Posterior vena cava (tissue), 2 donors: ENCODE measurements at regions of chr13 and their contacts with region 1.

Region 1: DNA sequence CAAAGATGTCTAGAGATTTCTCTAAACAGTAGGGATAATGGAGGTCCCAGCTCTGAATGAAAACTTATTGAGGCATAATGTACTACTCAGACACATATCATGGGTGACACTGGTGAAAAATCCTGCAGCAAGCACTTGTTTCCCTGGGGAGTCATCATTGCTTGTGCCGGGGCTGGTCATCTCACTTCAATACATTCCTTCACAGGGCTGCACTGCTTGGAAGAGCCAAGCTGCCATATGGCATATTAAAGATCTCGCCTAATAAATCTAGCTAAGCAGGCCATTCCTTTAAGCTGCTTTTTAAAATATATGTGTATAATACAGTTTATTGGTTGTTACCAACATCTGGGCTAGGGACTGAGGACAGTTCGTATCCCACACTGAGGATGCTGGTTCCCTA is 332.2 kb upstream of the GPC6 start:
- DNase-seq: no peak

Region 2: GRCh38 chr13:92488249-92488852 is 406.1 kb before region 1 on chr13:
- intact Hi-C with region 1: no loop called
- DNase-seq: no peak

Region 3: GRCh38 chr13:92671821-92672220 is 222.6 kb before region 1 on chr13:
- intact Hi-C with region 1: no loop called
- DNase-seq: no peak

Region 4: DNA sequence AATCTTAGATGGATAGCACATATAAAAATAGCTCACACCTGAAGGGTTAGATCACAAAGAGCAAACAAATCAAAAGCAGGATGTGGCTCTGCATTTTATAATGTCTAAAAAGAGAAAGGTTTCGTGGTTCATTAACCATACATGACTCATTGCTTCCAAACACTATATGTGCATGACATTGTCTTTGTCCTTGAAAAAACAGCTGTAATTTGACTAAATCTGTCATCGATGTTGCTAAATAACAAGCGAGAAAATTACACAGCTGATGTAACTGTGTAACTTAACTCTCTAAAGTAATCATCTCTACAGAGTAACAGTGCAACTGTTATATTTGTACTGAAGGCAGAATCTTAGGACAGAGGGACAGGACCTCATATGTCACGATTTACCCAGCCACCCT is 50.9 kb before region 1 on chr13:
- intact Hi-C with region 1: loop called in 1 of 2 experiments (anchors 2 kb)
- DNase-seq: no peak

Region 5: GRCh38 chr13:92963029-92963428 is 68.6 kb after region 1 on chr13:
- intact Hi-C with region 1: no loop called
- DNase-seq: no peak